Gastrocnemius medialis (tissue), 4 donors: ENCODE measurements at regions of chr20 and their contacts with region 1.

Region 1: GRCh38 chr20:8829256-8829655 is 239.6 kb upstream of the PLCB4 start:
- DNase-seq: no peak
- ATAC-seq: no peak
- H3K4me3 ChIP-seq: no peak overlapping the region
- H3K27ac ChIP-seq: no peak overlapping the region
- H3K4me1 ChIP-seq: no peaks in the 10 kb centered on the region
- H3K27me3 ChIP-seq: no peaks in the 10 kb centered on the region
- CTCF ChIP-seq: no peak
- POLR2A ChIP-seq: no peak

Region 2: GRCh38 chr20:8740265-8740664 is 89.0 kb before region 1 on chr20:
- in situ Hi-C with region 1: loop called in 1 of 4 experiments (anchors 25 kb)
- intact Hi-C with region 1: no loop called
- DNase-seq: no peak
- ATAC-seq: no peak
- H3K4me3 ChIP-seq: no peak overlapping the region
- H3K27ac ChIP-seq: no peak overlapping the region
- H3K4me1 ChIP-seq: no peaks in the 10 kb centered on the region
- H3K27me3 ChIP-seq: no peaks in the 10 kb centered on the region
- CTCF ChIP-seq: no peak
- POLR2A ChIP-seq: no peak

Region 3: DNA sequence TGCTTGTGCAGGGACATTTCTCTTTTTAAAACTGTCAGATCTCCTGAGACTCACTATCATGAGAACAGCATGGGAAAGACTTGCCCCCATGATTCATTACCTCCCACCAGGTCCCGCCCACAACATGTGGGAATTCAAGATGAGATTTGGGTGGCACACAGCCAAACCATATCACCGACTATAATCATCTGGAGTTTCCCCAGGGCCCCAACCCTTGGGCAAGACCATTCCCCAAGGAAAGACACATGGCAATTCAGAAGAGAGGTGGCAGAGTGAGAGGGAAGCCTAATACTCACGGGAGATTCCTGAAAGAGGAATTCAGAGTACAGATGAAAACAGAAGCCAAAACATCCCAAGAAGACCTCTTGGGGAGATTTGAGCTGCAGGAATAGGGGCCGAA is 51.3 kb before region 1 on chr20:
- in situ Hi-C with region 1: no loop called
- intact Hi-C with region 1: no loop called
- DNase-seq: no peak
- ATAC-seq: no peak
- H3K4me3 ChIP-seq: no peak overlapping the region
- H3K27ac ChIP-seq: no peak overlapping the region
- H3K4me1 ChIP-seq: no peaks in the 10 kb centered on the region
- H3K27me3 ChIP-seq: no peaks in the 10 kb centered on the region
- CTCF ChIP-seq: no peak
- POLR2A ChIP-seq: no peak